SK-N-SH (cell line): ENCODE measurements at regions of chr17 and their contacts with region 1.

Region 1: GRCh38 chr17:80575057-80575875 is 30.6 kb downstream of the RPTOR start:
- DNase-seq: peak; percentile 96
- H3K4me3 ChIP-seq: no peak overlapping the region; a peak in 1 of 4 replicates
- H3K27ac ChIP-seq: no peak overlapping the region
- H3K4me1 ChIP-seq: no peaks in the 10 kb centered on the region
- H3K27me3 ChIP-seq: no peaks in the 10 kb centered on the region
- CTCF ChIP-seq: peak; percentile 100
- EP300 ChIP-seq: no peak
- RAD21 ChIP-seq: peak; percentile 97

Region 2: GRCh38 chr17:80426681-80427326 is 148.5 kb before region 1 on chr17:
- CTCF ChIA-PET with region 1: interaction called, 27 read pairs
- POLR2A ChIA-PET with region 1: no interaction called
- DNase-seq: peak; percentile 98
- H3K4me3 ChIP-seq: no peak overlapping the region; a peak in 1 of 4 replicates
- H3K27ac ChIP-seq: no peak overlapping the region
- H3K4me1 ChIP-seq: no peaks in the 10 kb centered on the region; a peak in 1 of 4 replicates
- H3K27me3 ChIP-seq: no peaks in the 10 kb centered on the region
- CTCF ChIP-seq: peak; percentile 99
- EP300 ChIP-seq: no peak
- RAD21 ChIP-seq: peak; percentile 99

Region 3: DNA sequence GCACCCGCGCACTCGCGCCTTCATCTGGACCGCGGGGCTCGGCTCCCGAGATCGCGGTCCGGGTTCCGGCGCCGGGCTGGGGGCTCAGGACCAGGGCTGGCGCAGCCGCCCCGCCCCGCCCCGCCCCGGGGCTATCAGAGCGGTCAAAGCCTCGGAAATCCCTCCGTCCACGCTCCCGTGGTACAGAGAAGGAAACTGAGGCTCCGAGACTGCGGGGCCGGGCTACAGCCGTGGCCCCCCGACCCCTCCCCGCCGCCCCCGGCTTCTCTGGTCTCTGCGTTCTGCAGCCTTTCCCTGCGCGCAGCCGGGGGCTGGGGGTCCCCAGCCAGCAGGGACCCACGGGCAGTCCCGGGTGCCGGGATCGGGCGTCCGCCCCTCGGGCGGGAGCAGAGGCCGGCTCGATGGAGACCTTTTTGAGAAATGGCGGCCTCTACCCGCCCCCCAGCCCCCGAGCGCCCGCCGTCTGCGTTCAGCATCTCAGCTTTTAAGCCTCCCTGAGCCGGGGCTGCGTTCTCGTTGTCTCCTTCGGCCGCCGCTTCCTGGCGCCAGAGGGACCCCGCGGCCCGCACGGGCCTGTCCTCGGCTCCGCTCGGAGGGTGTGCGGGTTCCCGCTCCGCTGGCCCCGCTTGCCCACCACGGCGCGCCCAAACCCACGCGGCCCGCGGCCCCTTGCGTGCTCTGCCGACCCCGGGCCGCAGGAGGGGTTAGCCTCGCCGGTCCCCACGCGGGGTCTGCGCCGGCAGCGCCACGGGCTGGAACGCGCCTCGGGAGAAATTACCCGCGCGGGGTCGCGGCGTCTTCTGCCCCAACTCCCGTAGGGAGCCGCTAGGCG is 97.4 kb before region 1 on chr17:
- CTCF ChIA-PET with region 1: interaction called, 71 read pairs
- POLR2A ChIA-PET with region 1: no interaction called
- DNase-seq: peak; percentile 95
- H3K4me3 ChIP-seq: peak overlapping the region; percentile 29 to 58
- H3K27ac ChIP-seq: no peak overlapping the region
- H3K4me1 ChIP-seq: peaks cover 0 to 14% of the 10 kb centered on the region in 2 experiments; a peak in 1 of 4 replicates
- H3K27me3 ChIP-seq: peaks cover 95% of the 10 kb centered on the region
- CTCF ChIP-seq: peak; percentile 60
- EP300 ChIP-seq: no peak
- RAD21 ChIP-seq: peak; percentile 77

Region 4: DNA sequence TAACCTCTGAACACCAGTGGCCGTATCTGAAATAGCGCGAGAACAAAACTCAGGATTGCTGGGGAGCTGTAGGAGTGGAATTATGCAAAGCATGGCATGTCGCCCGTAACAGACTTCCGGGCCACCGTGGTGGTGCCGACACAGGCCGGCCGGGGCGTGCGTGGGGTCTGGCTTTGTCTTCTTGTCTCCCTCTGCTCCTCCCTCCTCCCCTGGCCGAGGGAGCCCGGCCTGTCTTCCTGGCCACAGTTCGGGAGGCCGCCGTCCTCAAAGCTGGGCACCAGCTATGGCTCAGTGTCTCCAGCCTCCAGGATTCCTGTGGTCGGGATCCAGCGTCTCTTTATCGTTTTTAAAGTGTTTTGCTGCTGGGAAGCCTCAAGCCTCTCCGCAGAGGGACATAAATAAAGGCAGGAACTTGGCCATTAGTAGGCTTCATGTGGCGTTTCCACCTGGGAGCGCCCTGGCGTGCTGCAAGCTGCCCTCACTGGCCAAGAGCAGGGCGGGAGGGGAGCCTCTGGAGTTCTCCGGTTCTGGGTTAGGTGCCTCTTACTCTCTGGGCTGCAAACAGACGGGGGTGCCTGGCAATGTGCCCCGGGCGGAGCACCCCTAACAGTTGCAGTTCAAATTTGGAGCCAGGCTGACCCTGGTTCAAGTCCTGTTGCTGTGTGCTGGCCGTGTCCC is 76.9 kb before region 1 on chr17:
- CTCF ChIA-PET with region 1: interaction called, 21 read pairs
- POLR2A ChIA-PET with region 1: no interaction called
- DNase-seq: no peak
- H3K4me3 ChIP-seq: no peak overlapping the region
- H3K27ac ChIP-seq: no peak overlapping the region
- H3K4me1 ChIP-seq: peaks cover 0 to 10% of the 10 kb centered on the region in 2 experiments; a peak in 1 of 4 replicates
- H3K27me3 ChIP-seq: peaks cover 5% of the 10 kb centered on the region
- CTCF ChIP-seq: no peak
- EP300 ChIP-seq: no peak
- RAD21 ChIP-seq: no peak

Region 5: DNA sequence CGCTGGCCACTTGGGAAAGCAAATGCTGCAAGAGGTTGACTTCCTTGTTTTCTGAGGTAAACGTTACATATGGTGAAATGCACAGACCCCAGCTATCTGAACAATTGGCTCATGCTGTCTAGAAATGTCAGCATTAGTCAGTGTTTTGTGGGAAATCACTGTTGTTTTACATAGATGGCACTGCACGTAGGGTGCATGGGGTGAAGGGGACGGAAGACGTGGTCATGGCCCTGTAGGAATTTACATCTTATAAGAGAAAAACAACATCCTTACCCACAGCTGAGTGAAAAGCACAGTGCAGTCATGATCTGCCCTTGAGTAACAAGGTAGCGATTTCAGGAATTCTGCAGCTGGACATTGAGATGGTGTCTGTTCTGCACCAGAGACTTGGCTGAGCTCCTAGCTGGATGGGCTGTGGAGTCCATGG is 15.4 kb before region 1 on chr17:
- CTCF ChIA-PET with region 1: interaction called, 51 read pairs
- POLR2A ChIA-PET with region 1: no interaction called
- DNase-seq: no peak
- H3K4me3 ChIP-seq: no peak overlapping the region
- H3K27ac ChIP-seq: no peak overlapping the region
- H3K4me1 ChIP-seq: peaks cover 3 to 17% of the 10 kb centered on the region in 2 experiments; a peak in 3 of 4 replicates
- H3K27me3 ChIP-seq: no peaks in the 10 kb centered on the region
- CTCF ChIP-seq: no peak
- EP300 ChIP-seq: no peak
- RAD21 ChIP-seq: no peak

Region 6: DNA sequence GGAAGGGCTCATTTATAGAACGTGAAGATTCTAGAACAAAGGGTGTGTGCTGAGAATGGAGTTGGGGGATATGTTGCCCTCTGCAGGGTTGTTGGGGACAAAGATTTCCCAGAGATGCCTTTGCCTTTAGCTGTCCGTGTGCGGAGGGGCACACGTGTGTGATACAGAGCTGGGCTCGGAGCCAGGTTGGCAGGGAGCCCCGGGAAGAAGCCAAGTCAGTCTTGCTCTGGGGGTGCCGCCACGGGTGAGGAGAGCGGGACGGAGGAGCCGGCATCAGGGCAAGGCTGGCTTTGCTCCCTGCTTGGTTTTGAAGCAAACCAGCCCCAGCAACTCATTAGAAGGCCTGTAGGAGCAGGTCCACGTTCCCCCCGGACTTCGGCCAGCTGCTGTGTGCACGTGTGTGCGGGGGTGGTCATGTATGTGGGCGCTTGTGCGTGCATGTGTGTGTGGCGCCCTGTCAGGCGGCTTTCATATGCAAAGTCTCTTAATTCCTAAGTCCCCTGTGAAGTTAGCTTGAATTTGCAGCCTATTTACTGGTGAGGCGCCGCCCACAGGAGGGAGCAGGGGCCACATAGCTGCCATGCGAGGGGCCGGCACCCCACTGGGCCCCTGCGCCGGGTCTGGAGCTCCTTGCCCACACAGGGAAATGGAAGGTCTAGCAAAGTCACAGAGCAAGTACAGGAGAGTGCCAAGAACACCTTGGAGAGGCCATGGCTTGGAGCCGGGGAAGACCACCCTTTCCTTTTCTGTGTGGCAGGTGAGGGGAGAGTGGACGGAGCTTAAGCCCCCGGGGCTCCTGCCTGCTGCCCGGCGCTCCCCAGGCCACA is 284.3 kb after region 1 on chr17:
- CTCF ChIA-PET with region 1: interaction called, 12 read pairs
- POLR2A ChIA-PET with region 1: no interaction called
- DNase-seq: peak; percentile 88
- H3K4me3 ChIP-seq: no peak overlapping the region
- H3K27ac ChIP-seq: peak overlapping the region; percentile 72 to 96
- H3K4me1 ChIP-seq: peaks cover 35 to 55% of the 10 kb centered on the region in 2 experiments
- H3K27me3 ChIP-seq: no peaks in the 10 kb centered on the region
- CTCF ChIP-seq: peak; percentile 60
- EP300 ChIP-seq: peak; percentile 62 to 63; a peak in 3 of 4 replicates
- RAD21 ChIP-seq: peak; percentile 69

Region 7: GRCh38 chr17:80981062-80981902 is 406.0 kb after region 1 on chr17:
- CTCF ChIA-PET with region 1: interaction called, 12 read pairs
- POLR2A ChIA-PET with region 1: no interaction called
- DNase-seq: peak; percentile 99
- H3K4me3 ChIP-seq: peak overlapping the region; percentile 25 to 44
- H3K27ac ChIP-seq: no peak overlapping the region
- H3K4me1 ChIP-seq: no peaks in the 10 kb centered on the region; a peak in 1 of 4 replicates
- H3K27me3 ChIP-seq: no peaks in the 10 kb centered on the region
- CTCF ChIP-seq: peak; percentile 96
- EP300 ChIP-seq: no peak
- RAD21 ChIP-seq: peak; percentile 86